ENCODE measurements at regions of chr22 and their contacts with region 1.

Region 1: GRCh38 chr22:37316875-37317371 is 34.6 kb downstream of the CYTH4 start:
- DNase-seq: peak; percentile 66
- H3K4me3 ChIP-seq: no peak overlapping the region
- H3K27ac ChIP-seq: no peak overlapping the region
- H3K27me3 ChIP-seq: no peaks in the 10 kb centered on the region
- CTCF ChIP-seq: peak; percentile 95

Region 2: GRCh38 chr22:37457093-37457893 is 140.4 kb after region 1 on chr22:
- CTCF ChIA-PET with region 1: interaction called, 154 read pairs
- POLR2A ChIA-PET with region 1: interaction called, 4 read pairs
- DNase-seq: no peak
- H3K4me3 ChIP-seq: no peak overlapping the region
- H3K27ac ChIP-seq: no peak overlapping the region
- H3K27me3 ChIP-seq: peaks cover 8% of the 10 kb centered on the region
- CTCF ChIP-seq: peak; percentile 96